ENCODE measurements at regions of chr6 and their contacts with region 1.

Region 1: GRCh38 chr6:35771343-35771627 is 5.1 kb upstream of the CLPSL2 start:
- DNase-seq: no peak
- ATAC-seq: no peak
- H3K4me3 Mint-ChIP-seq: peak overlapping the region; percentile 74
- H3K27ac Mint-ChIP-seq: peak overlapping the region; percentile 95
- H3K4me1 Mint-ChIP-seq: peaks cover 30% of the 10 kb centered on the region
- H3K27me3 Mint-ChIP-seq: no peaks in the 10 kb centered on the region
- CTCF ChIP-seq: no peak

Region 2: DNA sequence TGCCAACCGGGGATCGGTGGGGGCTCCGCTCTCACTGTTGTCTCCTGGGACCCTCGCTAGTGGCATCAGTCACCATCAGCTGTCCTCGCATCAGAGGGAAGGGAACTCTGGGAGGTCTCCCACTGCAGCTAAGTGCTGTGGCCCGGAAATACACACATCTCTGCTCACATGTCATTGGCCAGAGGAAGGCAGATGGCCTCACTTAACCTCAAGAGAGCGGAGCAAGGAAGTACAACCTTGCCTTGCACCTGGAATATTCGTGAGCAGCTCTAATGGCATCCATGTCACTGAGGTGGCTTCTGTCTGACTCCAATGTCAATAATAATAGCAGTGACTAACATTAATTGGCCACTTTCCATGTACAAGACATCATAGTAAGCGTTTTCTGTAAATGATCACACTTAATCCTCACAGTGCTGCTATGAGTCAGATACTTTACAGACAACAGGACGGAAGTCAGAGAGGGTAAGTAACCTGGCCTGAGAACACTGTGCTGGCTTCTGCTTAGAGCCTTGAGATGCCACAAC is 39.7 kb after region 1 on chr6:
- CTCF ChIA-PET with region 1: no interaction called
- POLR2A ChIA-PET with region 1: interaction called, 10 read pairs
- intact Hi-C with region 1: no loop called
- DNase-seq: no peak
- ATAC-seq: no peak
- H3K4me3 Mint-ChIP-seq: no peak overlapping the region
- H3K27ac Mint-ChIP-seq: no peak overlapping the region
- H3K4me1 Mint-ChIP-seq: no peaks in the 10 kb centered on the region
- H3K27me3 Mint-ChIP-seq: peaks cover 25% of the 10 kb centered on the region
- CTCF ChIP-seq: no peak

Region 3: DNA sequence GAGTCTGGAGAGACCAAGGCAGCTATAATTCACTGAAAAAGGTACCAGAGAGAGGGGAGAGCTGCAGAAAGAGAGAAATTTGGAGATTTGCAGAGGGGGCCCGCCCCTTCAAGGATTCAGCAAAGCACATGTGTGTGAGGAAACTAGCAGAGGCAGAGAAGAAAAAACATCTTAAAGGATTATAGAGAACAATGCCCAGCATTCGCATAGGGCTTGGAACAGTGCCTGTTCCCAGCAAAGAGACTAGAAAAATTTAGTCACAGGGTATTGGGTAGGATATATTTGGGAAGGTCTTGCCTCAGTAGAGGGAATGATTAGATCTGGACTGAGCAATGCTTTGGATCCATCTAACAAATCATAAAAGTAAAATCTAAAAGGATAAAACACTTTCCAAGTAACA is 105.6 kb after region 1 on chr6:
- CTCF ChIA-PET with region 1: no interaction called
- POLR2A ChIA-PET with region 1: no interaction called
- intact Hi-C with region 1: no loop called
- DNase-seq: no peak
- ATAC-seq: no peak
- H3K4me3 Mint-ChIP-seq: no peak overlapping the region
- H3K27ac Mint-ChIP-seq: no peak overlapping the region
- H3K4me1 Mint-ChIP-seq: peaks cover 4% of the 10 kb centered on the region
- H3K27me3 Mint-ChIP-seq: no peaks in the 10 kb centered on the region
- CTCF ChIP-seq: no peak

Region 4: GRCh38 chr6:36268478-36269275 is 497.4 kb after region 1 on chr6:
- CTCF ChIA-PET with region 1: no interaction called
- POLR2A ChIA-PET with region 1: no interaction called
- intact Hi-C with region 1: no loop called
- DNase-seq: no peak
- ATAC-seq: no peak
- H3K4me3 Mint-ChIP-seq: no peak overlapping the region
- H3K27ac Mint-ChIP-seq: no peak overlapping the region
- H3K4me1 Mint-ChIP-seq: no peaks in the 10 kb centered on the region
- H3K27me3 Mint-ChIP-seq: peaks cover 11% of the 10 kb centered on the region
- CTCF ChIP-seq: no peak